Pancreas (tissue), 10 donors: ENCODE measurements at regions of chr9 and their contacts with region 1.

Region 1: DNA sequence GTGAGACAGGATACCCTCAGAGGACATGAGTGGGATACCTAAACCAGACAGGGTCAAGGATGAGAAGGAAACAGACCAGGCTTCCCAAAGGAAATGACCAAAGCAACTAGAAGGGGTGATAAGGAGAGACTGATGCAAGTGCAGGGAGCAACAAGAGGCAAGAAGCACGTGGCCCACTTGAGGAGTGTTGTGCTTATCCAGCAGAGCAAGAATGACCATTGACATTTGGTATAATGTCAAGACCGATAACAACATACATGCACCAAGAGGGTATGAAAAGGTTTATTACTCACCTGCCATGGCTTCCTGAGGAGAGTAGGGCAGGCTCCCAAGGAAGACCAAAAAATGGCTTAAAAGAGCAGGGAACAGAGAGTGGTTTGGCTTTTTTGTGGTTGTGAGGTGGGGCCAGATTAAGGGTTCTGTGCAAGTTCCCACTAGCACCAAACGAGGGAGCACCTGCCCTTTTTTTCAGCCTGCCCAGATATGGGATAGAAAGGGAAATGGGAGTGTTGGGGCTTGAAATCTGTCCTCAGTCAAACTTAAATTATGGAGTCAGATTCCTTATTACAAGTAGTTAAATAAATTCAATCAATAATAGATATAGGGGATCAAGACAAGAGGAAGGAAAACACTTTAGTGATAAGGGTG is 513.6 kb downstream of the RASEF start:
- DNase-seq: peak in 1 of 6 donors; percentile 8
- ATAC-seq: peak; percentile 38 to 79 (median 70)
- H3K4me3 ChIP-seq: no peak overlapping the region
- H3K27ac ChIP-seq: no peak overlapping the region
- H3K4me1 ChIP-seq: peaks cover 0 to 10% (median 3%) of the 10 kb centered on the region in 3 donors
- H3K27me3 ChIP-seq: no peaks in the 10 kb centered on the region
- CTCF ChIP-seq: no peak

Region 2: GRCh38 chr9:82299870-82300269 is 249.4 kb before region 1 on chr9:
- intact Hi-C with region 1: no loop called
- DNase-seq: no peak
- ATAC-seq: no peak
- H3K4me3 ChIP-seq: no peak overlapping the region
- H3K27ac ChIP-seq: no peak overlapping the region
- H3K4me1 ChIP-seq: no peaks in the 10 kb centered on the region
- H3K27me3 ChIP-seq: no peaks in the 10 kb centered on the region
- CTCF ChIP-seq: no peak

Region 3: DNA sequence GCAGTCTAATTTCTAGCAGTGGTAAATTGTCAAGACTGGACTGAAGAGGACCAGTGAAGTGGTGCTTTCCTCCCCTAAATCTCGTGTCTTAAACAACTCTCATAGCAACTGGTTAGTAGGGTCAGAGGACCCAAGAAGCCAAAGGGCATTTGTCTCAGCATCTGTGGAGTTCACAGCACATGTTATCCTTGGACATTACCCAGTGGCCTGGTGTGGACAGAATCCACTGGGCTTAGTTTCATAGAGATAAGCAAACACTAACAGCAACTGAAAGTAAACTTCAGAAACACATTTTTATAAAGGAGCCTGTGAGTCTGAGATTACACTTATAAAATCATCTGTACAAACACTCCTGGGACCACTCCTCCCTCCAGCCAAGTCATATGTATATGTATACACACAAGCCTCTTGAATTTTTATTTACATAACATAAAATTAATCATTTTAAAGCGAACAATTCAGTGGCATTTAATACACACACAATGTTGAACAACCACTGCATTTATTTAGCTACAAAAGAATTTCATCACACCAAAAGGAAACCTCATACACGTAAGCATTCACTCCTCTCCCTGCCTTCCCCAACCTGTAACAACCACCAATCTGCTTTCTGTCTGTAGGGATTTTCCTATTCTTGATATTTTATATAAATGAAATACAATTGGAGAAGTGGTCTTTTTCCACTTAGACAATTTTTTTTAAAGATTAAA is 55.8 kb after region 1 on chr9:
- intact Hi-C with region 1: loop called in 1 of 3 experiments (anchors 5 kb)
- DNase-seq: peak in 4 of 6 donors; percentile 41 to 83 (median 69)
- ATAC-seq: peak; percentile 85 to 92 (median 90)
- H3K4me3 ChIP-seq: no peak overlapping the region
- H3K27ac ChIP-seq: peak overlapping the region; percentile 4 to 74 (median 49)
- H3K4me1 ChIP-seq: peaks cover 21 to 47% (median 36%) of the 10 kb centered on the region in 3 donors
- H3K27me3 ChIP-seq: no peaks in the 10 kb centered on the region
- CTCF ChIP-seq: no peak

Region 4: GRCh38 chr9:82621447-82621846 is 72.1 kb after region 1 on chr9:
- intact Hi-C with region 1: no loop called
- DNase-seq: no peak
- ATAC-seq: no peak
- H3K4me3 ChIP-seq: no peak overlapping the region
- H3K27ac ChIP-seq: no peak overlapping the region
- H3K4me1 ChIP-seq: no peaks in the 10 kb centered on the region
- H3K27me3 ChIP-seq: no peaks in the 10 kb centered on the region
- CTCF ChIP-seq: no peak

Region 5: DNA sequence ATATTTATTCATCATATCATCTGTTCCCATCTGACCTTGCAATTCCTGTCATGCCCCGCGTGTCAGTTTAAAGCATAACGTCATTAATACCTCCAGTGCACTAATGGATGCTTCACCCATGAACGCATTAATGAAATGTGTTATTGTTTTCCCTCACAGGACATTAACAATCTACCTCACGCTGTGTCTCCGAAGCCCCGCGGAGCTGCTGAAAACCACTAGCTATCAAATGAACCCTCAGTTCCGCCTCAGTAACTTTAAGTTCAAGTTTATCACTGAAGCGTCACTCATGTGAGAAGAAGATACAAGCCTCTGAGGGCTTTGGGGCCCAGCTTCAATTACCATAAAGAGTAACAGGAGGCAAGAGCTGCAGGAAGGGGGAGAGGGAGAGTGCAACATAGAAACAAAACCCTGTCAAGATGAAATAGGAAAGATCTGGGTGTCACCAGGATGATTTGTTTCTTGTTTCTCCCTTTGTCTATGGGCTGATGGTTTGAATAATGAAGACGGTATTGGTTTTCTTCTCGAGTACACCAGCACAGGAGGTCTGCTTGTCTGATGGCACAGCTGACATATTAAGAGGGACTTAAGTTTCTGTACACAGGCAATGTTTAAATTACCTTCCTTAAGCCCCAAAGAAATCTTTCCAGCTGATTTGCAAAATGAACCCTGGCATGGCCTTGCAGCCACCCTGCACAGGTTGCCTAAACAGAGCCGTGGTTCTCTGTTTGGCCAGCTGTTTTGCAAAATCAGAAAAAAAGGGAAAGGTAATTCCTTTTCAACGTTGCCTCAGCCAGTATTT is 374.4 kb after region 1 on chr9:
- intact Hi-C with region 1: no loop called
- DNase-seq: no peak
- ATAC-seq: peak in 3 of 4 donors; percentile 47 to 58 (median 57)
- H3K4me3 ChIP-seq: no peak overlapping the region
- H3K27ac ChIP-seq: no peak overlapping the region
- H3K4me1 ChIP-seq: no peaks in the 10 kb centered on the region
- H3K27me3 ChIP-seq: no peaks in the 10 kb centered on the region
- CTCF ChIP-seq: no peak

Region 6: DNA sequence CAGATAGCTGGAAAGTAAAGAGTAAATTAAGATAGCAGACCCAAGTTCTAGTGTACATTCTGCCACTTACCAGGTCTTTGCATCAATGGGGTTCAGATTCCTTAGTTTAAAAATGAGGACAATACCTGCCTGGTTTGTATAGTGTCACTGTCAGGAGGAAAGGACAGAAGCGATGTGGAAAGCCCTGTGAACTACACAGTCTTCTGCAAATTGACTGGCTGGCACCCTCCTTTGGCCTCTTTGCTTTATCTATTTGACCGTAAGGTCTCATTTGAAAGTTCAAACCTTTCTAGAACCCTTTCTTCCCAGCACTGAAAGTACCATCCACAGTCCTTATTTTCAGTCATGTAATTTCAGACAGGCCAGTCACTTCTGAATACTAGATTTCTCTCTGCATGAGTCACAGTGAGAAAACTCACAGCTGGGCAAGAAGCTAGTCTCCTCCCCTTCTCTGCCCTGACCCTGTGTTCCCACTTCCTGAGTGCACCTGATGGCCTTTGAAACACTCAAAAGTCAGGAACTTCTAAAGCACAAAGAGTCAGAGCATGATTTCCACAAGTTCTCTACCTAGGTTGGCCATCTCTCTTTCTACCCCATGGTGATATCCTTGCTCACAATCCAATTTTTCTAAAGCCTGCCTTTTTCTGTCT is 604.9 kb after region 1 on chr9:
- intact Hi-C with region 1: no loop called
- DNase-seq: peak in 5 of 6 donors; percentile 37 to 90 (median 85)
- ATAC-seq: peak; percentile 91 to 95 (median 93)
- H3K4me3 ChIP-seq: no peak overlapping the region
- H3K27ac ChIP-seq: peak overlapping the region; percentile 77 to 86 (median 82)
- H3K4me1 ChIP-seq: peaks cover 20 to 36% (median 28%) of the 10 kb centered on the region in 3 donors
- H3K27me3 ChIP-seq: no peaks in the 10 kb centered on the region
- CTCF ChIP-seq: no peak